ENCODE measurements at regions of chr22 and their contacts with region 1.

Region 1: DNA sequence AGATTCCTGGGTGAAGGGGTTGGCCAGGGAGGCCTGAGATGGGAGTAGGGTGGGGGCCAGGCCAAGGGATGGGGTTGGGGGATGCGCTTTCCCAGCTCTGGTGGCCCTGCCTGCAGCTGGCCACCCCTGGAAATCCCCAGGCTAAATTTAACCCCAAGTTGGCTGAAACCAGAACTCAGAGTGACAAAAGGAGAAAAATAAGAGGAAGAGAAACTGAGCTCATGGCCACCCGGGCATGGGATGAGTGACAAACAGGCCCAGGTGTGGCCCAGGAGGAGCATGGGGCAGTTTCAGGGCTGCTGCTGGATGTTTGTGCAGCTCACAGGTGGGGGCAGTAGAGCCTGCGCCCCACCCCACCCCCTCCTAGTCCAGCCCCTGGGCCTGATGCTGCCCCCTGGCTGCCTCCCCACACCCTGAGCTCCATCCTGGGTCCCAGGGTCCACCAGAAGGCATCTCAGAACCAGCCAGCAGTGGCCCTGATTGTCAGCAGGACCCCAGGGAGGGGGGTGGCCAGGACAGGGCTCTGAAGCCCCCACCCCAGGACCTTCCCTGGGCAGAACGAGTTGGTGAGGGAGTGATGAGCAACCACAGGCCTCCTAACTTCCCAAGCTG is 48.0 kb downstream of the IGLL5 start:
- DNase-seq: peak; percentile 96
- CTCF ChIP-seq: peak; percentile 71

Region 2: GRCh38 chr22:22030493-22031182 is 905.0 kb before region 1 on chr22:
- in situ Hi-C with region 1: loop called (anchors 10 kb)
- DNase-seq: peak; percentile 74
- CTCF ChIP-seq: peak; percentile 97

Region 3: DNA sequence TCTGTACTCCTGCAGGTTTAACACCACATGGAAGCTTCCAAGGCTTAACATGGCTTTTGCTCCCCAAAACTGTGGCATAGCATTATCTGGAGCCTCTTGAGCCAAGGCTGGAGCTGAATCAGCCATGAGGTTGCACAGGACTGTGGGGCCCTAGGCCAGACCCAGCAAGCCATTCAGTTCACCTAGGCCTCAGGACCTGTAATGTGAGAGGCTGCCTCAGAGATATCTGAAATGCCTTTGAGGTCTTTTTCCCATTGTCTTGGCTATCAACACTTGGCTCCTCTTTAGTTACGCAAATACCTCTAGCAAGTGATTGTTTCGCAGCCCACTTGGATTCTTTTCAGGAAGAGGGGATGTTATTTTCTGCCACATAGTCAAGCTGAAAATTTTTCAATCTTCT is 619.1 kb before region 1 on chr22:
- in situ Hi-C with region 1: loop called (anchors 10 kb)
- DNase-seq: no peak
- CTCF ChIP-seq: no peak